Aorta (tissue), 5 donors: ENCODE measurements at regions of chr15 and their contacts with region 1.

Region 1: DNA sequence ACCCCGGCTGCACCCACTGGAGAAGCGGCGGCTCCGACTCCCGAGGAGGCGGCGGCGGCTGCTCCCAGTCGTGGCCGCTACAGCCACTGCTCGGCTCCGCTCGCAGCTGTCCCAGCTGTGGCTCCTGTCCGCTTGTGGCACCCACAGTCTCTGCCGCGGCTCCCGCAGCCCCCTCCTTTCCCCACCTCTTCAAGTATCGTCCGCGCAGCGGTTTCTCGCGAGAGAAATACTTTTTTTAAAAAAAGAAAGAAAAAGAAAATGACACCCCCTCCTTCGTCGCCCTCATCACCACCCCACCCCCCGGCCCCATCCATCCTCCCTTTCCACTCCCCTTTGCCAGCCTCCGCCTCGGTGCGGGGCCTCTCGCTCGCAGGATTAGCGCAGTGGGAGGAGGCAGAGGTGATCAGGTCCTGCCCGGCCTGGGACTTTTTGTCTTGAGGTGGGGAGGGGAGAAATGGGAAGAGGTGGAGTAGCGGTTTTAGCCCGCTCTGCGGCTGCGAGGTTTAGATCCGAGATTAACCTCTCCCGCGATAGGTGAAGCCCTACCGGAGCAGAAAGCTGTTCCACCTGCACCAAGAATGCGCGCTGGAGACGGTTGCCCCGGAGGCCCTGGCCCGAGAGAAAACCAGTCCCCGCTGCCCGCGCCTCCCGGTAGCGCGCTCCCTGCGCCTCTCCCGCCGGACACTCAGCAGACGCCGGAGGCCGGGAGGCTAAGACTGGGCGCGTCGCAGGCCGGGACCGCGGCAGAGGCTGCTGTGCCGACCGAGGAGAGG is at the start of gene FBN1:
- DNase-seq: peak; percentile 84 to 91
- ATAC-seq: peak; percentile 93
- H3K4me3 ChIP-seq: peak within 1 kb of the TSS; percentile 61 to 62
- H3K27ac ChIP-seq: peak within 1 kb of the TSS; percentile 62 to 89
- H3K4me1 ChIP-seq: no peaks in the 10 kb centered on the region
- H3K27me3 ChIP-seq: no peaks in the 10 kb centered on the region
- total RNA-seq, gene FBN1: 167 to 529 TPM

Region 2: DNA sequence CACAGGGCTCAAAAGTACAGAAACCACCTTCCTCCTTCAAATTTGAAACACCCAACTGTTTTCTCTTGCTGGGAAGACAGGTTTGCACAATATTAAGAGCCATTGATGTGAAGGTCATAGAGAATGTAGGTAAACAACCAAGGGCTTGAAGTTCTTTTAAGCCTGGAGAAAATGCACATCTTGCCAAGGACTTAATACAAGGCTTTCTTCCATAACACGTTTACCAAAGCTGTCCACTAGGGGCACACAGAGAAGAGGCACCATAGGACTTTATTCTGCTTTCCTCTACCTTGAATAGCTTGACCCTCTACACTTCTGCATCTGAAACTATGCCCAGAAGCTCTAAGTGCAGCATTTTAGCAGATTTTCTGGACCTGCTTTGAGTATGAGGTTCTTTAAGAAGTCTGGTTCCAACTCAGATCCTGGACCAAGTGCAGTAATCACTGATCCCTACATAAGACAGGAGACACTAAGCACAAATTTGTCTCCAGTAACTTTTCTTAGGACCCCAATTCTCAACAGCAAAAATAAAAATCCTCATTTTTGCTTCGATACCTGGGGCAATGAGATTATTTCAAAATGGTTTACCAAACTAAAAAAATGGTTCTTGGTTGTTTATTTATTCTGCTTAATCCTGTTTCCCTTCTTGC is 138.2 kb before region 1 on chr15:
- intact Hi-C with region 1: loop called (anchors 5 kb)
- DNase-seq: no peak
- ATAC-seq: peak; percentile 75
- H3K4me3 ChIP-seq: no peak overlapping the region
- H3K27ac ChIP-seq: no peak overlapping the region
- H3K4me1 ChIP-seq: peaks cover 3 to 4% of the 10 kb centered on the region in 2 donors
- H3K27me3 ChIP-seq: no peaks in the 10 kb centered on the region

Region 3: DNA sequence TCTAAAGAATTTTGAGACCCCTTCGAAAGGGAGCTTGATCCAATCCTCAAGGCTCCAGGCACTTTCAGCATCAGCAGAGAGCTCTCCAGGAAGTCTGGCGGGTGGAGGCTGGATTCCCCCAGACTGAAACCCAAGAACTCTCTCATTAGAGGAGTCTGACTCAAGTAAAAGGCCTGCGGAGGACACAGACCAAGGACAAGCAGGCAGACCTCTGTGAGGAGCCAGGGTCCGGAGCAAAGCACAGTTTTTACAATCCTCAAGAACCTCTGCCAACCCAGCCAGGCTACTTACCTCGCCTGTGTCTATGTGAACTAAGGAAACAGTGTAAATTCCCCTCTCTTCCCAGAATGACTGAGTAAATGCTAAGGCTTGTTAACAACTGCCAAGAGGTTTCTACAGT is 86.5 kb before region 1 on chr15:
- intact Hi-C with region 1: loop called in 1 of 2 experiments (anchors 5 kb)
- DNase-seq: peak in 1 of 2 donors; percentile 71
- ATAC-seq: peak; percentile 78
- H3K4me3 ChIP-seq: no peak overlapping the region
- H3K27ac ChIP-seq: peak overlapping the region in 1 of 2 donors; percentile 92
- H3K4me1 ChIP-seq: peaks cover 11 to 25% of the 10 kb centered on the region in 2 donors
- H3K27me3 ChIP-seq: no peaks in the 10 kb centered on the region

Region 4: DNA sequence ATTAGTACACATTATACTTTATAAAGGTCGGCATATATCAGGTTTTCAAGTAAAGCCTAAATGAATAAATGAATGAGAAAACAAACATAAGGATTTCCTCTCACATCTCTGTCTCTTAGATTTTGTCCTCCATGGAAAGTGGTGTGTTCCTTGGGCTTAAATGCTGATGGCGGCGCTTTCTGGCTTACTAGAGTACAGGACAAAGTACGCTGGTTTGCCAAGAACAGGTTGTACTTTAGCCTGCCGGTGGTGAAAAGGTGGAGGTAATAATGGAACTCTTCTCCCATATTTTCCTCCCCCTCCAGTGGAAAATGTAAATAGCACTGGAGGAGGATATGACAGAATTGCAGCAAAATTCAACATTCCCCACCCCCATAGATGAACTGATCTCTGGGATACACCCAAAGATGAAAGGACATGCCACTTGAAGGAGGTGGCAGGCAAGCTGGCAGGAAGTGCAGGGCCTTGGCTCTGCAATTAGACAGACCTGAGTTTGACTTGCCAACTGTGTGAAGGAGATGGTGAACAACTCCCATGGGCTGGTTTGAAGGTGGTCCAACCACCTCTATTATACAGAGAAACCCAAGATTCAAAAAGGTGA is 135.8 kb after region 1 on chr15:
- intact Hi-C with region 1: loop called in 1 of 2 experiments (anchors 5 kb)
- DNase-seq: no peak
- ATAC-seq: no peak
- H3K4me3 ChIP-seq: no peak overlapping the region
- H3K27ac ChIP-seq: no peak overlapping the region
- H3K4me1 ChIP-seq: peaks cover 1 to 4% of the 10 kb centered on the region in 2 donors
- H3K27me3 ChIP-seq: no peaks in the 10 kb centered on the region